ENCODE measurements at regions of chr6 and their contacts with region 1.

Region 1: DNA sequence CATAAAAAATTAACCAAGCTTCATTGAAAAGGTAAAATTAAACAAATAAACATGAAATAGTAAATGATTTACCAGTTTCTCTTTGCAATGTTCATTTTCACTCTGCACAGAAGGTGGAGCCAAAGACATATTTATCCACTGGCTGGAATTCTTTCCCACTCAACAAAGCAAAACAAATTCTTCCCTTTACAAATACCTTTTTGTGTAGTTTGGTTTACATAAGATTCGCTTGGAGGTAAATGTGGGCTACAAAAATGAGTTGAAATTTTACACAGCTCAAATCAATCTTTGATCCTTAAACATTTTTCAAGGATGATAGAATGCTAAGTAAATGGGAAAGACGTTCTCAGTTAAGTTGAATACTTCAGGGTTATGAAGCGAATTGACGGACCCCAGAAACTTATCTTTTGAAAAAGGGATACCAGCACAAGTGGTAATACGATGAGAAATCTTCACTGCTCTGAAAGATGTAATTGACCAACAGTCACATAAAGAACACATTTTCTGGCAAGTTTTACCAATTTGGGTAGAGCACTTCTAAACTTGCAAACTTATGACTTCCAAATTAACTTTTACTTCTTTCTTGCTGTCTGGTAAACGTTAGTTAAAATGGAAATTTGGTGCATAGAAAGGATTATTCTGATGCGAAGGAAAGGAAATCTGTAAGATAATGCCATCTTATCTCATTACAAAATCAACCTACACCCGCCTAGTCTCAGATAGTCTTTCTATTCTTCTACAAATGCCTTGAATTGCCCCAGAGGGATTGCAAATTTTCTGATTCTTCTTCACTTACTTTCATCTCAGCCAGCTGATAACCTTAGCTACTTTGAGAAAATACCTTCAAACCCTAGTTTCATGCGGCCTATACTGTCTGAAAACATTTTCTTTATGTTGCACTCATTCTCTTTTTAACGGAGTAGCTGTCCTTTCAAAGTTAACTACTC is 4.7 kb upstream of the GJA1 start:
- DNase-seq: no peak
- H3K4me3 ChIP-seq: no peak overlapping the region
- H3K27ac ChIP-seq: no peak overlapping the region
- H3K4me1 ChIP-seq: no peaks in the 10 kb centered on the region
- H3K27me3 ChIP-seq: no peaks in the 10 kb centered on the region
- CTCF ChIP-seq: peak; percentile 91

Region 2: DNA sequence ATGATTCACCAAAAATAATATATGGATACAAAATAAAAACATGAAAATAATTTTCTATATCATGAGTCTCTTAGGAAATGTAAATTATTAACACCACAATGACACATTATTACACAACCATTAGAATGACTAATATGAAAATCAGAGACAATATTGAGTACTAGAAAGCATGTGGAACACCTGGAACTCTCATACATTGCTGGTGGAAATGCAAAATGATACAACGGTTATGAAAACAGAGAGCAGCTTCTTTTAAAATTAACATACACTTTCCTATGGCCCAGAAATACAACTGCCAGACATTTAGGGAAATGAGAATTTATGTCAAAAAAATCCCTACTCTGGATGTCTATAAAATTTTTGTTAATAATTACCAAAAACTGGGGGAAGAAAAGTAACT is 1227.9 kb before region 1 on chr6:
- CTCF ChIA-PET with region 1: no interaction called
- POLR2A ChIA-PET with region 1: no interaction called
- intact Hi-C with region 1: no loop called
- DNase-seq: no peak
- H3K4me3 ChIP-seq: no peak overlapping the region
- H3K27ac ChIP-seq: no peak overlapping the region
- H3K4me1 ChIP-seq: 0 out of 2 replicates have a peak, but pooled peaks cover 3% of the 10 kb centered on the region
- H3K27me3 ChIP-seq: no peaks in the 10 kb centered on the region
- CTCF ChIP-seq: no peak

Region 3: DNA sequence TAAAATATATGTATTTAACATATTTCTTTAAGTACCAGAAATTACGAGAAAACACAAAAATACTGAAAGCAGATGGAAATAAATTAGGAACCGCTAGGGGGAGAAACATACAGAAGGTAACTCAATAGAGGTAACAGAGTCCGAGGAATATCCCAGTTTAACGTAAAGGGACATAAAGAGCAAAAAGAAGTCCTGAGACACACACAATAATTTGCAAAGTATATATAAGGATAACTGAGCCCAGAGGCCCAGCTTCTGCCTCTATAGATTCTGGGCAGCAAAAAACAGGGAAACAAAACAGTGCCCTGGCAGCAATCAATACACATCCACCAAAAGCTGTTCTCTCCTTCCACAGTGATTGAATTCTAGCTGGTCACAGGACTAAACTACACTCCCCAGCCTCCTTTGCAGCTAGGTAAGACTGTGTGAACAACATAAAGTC is 111.7 kb before region 1 on chr6:
- CTCF ChIA-PET with region 1: no interaction called
- POLR2A ChIA-PET with region 1: no interaction called
- intact Hi-C with region 1: no loop called
- DNase-seq: no peak
- H3K4me3 ChIP-seq: no peak overlapping the region
- H3K27ac ChIP-seq: no peak overlapping the region
- H3K4me1 ChIP-seq: no peaks in the 10 kb centered on the region
- H3K27me3 ChIP-seq: no peaks in the 10 kb centered on the region
- CTCF ChIP-seq: no peak

Region 4: DNA sequence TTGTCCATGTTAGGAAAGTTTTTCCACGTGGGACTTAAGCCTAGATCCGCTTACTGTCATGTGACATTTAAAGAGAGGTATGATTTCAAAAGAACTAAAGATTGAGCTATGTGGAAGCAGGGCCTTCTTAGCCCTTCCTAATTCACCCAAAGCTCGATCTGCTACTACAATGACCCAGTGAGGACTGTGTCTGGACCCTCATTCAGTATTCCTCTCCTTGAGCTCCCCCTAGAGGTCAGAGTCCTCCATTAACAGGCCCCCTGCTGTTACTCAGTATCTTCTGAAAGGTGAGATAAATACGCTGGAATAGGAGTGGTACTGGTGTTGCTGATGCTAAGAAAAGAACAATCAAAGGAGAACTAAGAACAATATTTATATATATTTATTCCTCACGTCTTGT is 418.7 kb after region 1 on chr6:
- CTCF ChIA-PET with region 1: interaction called, 5 read pairs
- POLR2A ChIA-PET with region 1: no interaction called
- intact Hi-C with region 1: loop called (anchors 1 kb)
- DNase-seq: peak in 1 of 2 experiments; percentile 35
- H3K4me3 ChIP-seq: no peak overlapping the region
- H3K27ac ChIP-seq: no peak overlapping the region
- H3K4me1 ChIP-seq: no peaks in the 10 kb centered on the region
- H3K27me3 ChIP-seq: no peaks in the 10 kb centered on the region
- CTCF ChIP-seq: peak; percentile 83

Region 5: GRCh38 chr6:122033539-122034181 is 602.9 kb after region 1 on chr6:
- CTCF ChIA-PET with region 1: no interaction called
- POLR2A ChIA-PET with region 1: interaction called, 4 read pairs
- intact Hi-C with region 1: loop called (anchors 1 kb)
- DNase-seq: peak in 1 of 2 experiments; percentile 76
- H3K4me3 ChIP-seq: no peak overlapping the region
- H3K27ac ChIP-seq: no peak overlapping the region
- H3K4me1 ChIP-seq: peaks cover 13% of the 10 kb centered on the region
- H3K27me3 ChIP-seq: no peaks in the 10 kb centered on the region
- CTCF ChIP-seq: peak; percentile 92

Region 6: DNA sequence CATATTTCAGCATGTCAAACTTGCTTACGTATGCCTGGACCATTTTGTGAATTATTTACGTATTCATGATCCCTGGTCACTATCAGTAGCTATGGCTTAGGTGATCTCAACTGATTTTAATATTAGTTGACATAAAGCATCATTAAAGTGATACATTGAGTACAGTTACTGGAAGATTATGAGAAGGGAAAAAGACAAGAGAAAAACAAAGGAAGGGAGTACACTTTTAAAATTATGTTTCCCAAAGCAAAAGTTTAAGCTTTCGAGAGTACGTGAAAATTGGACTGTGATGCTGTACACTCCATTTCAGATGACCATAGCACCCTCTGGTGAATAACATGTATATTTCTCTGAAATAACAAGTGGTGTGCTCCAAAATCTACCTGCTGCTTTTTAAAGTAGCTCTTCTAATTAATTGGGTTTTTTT is 753.6 kb after region 1 on chr6:
- CTCF ChIA-PET with region 1: no interaction called
- POLR2A ChIA-PET with region 1: no interaction called
- intact Hi-C with region 1: loop called (anchors 1 kb)
- DNase-seq: no peak
- H3K4me3 ChIP-seq: no peak overlapping the region
- H3K27ac ChIP-seq: no peak overlapping the region
- H3K4me1 ChIP-seq: no peaks in the 10 kb centered on the region
- H3K27me3 ChIP-seq: no peaks in the 10 kb centered on the region
- CTCF ChIP-seq: peak; percentile 62; the same call in 1 of the 2 replicates

Region 7: DNA sequence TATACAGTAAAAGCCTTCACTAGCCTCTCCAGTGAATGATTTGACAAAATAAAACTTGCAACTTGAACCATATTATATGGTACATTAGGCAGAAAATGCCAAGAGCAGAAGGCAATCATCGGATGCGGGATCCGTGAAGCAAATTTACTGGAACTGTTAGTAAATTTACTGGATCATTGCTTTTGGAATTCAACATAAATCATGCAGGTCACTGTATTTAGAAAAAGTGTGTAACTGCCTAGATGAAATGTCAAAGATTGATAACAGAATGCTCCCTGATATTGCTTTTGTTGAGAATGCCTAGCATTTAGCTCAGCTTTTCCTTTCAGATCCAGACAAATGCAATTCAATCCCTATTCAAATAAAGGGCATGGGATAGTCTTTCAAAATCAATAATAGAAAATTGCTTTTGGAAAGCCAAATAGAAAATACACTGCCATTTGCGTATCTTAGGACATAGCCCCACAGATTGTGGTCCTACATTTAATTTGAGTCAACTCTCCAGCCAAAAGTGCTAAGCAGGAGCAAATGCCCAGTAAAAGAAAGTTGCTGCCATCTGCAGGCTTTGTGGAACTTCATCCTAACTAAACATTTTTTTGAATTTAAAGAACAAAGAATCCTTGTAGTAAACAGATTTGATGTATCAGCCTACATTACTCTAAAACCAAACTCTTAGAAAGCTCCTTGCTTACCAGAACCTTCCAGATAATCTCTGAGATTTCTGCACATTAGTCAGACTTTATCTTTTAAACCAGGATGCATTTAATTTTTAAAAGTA is 859.2 kb after region 1 on chr6:
- CTCF ChIA-PET with region 1: no interaction called
- POLR2A ChIA-PET with region 1: no interaction called
- intact Hi-C with region 1: loop called (anchors 5 kb)
- DNase-seq: no peak
- H3K4me3 ChIP-seq: no peak overlapping the region
- H3K27ac ChIP-seq: no peak overlapping the region
- H3K4me1 ChIP-seq: no peaks in the 10 kb centered on the region
- H3K27me3 ChIP-seq: no peaks in the 10 kb centered on the region
- CTCF ChIP-seq: peak; percentile 54; the same call in 1 of the 2 replicates

Measured in PC-9 (cell line).